BJ (cell line): ENCODE measurements at regions of chr6 and their contacts with region 1.

Region 1: DNA sequence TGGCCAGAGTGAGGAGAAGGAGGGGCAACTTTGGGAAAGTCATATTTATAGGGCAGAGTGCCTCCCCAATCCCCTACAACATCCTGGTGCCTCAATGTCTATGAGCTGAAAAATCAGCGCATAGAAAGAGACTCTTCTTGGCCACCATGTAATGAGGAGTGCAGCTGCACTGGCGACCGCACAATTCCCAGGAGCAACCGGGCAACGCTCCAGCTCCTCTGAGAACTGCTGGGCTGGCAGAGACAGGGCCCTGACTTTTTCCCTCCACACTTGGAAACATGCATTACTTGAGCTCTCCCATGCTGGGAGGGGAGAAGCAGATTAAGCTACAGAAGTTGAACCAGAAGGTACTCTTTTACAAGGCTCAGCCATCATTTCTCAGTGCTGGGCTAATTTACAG is 31.4 kb upstream of the MARCKS start:
- DNase-seq: peak; percentile 34
- H3K4me3 ChIP-seq: no peak overlapping the region
- H3K27me3 ChIP-seq: no peaks in the 10 kb centered on the region
- CTCF ChIP-seq: no peak

Region 2: DNA sequence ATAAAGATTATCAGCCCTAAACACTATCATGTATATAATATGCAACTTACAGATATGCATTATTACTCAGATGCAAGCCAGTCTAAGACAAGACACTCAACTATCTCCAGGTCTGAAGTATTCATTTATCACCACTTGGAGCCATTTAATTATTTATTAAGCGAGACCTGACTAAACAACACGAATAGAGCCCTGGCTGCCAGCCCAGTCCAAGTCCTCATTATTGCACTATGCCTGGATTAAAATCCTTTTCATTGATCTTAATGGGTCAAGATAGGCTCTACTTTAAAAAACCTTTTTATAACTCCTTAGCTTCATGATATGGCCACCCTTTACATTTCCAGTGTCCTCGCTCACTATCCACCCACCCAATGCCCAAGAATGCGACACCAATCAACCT is 151.7 kb before region 1 on chr6:
- CTCF ChIA-PET with region 1: no interaction called
- POLR2A ChIA-PET with region 1: no interaction called
- DNase-seq: no peak
- H3K4me3 ChIP-seq: no peak overlapping the region
- H3K27me3 ChIP-seq: no peaks in the 10 kb centered on the region
- CTCF ChIP-seq: no peak

Region 3: DNA sequence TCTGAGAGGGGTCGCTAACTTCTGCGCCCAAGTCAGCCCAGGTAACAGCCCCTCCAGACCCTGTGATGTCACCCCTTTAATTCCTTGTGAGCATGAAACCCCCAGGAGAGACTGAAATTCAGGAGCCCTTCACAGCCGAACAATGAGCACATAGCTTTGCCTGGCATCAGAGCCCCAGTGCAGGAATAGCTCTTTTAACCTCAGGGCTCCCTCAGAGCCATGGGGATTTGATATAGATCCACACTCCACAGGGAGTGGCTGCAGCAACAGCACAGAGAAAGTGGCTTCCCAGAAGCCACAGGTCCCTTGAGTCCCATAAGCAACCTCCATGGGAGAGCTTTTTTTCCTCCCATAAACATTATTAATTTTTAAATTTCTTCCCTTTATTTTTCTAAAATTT is 118.6 kb before region 1 on chr6:
- CTCF ChIA-PET with region 1: no interaction called
- POLR2A ChIA-PET with region 1: interaction called, 28 read pairs
- DNase-seq: no peak
- H3K4me3 ChIP-seq: no peak overlapping the region
- H3K27me3 ChIP-seq: peaks cover 4% of the 10 kb centered on the region
- CTCF ChIP-seq: no peak